Mammary epithelial cell (primary cell): ENCODE measurements at regions of chr16 and their contacts with region 1.

Region 1: GRCh38 chr16:18983565-18984424 is at the start of gene TMC7:
- DNase-seq: peak; percentile 83
- H3K4me3 ChIP-seq: peak within 1 kb of the TSS; percentile 56 to 82 (median 76)
- H3K27ac ChIP-seq: peak within 1 kb of the TSS; percentile 75
- H3K4me1 ChIP-seq: peaks cover 6% of the 10 kb centered on the region
- H3K27me3 ChIP-seq: no peaks in the 10 kb centered on the region
- CTCF ChIP-seq: peak; percentile 57 to 96
- total RNA-seq, gene TMC7: 13.7 to 17.5 TPM

Region 2: DNA sequence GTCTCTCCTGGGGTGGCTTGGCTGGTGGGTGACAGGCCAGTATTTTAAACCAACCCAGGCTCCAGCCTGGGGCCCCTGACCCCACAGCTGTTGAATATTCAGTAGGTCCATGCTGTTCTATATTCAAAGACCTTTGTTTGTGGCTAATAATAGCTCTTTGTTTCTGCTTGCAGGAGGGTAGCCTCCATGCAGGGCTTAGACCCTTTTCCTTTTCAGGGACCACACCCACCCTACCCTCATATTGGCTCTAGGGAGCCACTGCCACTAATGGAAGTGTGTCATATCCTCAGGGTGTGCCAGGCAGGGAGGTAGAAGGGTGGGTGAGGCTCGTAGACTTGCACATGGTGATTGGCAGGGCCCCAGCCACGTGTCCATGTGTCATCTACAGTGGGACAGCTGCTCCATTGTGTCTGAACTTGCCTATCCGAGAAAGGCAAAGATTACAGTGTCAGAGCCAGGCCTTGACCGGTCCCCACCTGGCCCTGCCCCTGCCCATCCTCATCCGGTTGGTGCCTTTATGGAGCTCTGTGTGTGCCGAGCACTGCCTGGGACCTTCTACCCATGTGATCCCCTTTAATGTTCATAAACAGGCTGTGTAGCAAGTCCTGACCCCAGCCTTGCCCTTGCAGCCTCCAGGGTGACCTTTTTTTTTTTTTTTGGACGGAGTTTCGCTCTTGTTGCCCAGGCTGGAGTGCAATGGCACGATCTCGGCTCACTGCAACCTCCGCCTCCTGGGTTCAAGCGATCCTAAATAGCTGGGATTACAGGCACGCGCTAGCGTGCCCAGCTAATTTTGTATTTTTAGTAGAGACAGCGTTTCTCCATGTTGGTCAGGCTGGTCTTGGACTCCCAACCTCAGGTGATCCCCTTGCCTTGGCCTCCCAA is 22.0 kb after region 1 on chr16:
- CTCF ChIA-PET with region 1: interaction called, 9 read pairs
- dilution Hi-C with region 1: no loop called
- in situ Hi-C with region 1: no loop called
- intact Hi-C with region 1: loop called (anchors 1 kb)
- DNase-seq: peak; percentile 99
- H3K4me3 ChIP-seq: no peak overlapping the region
- H3K27ac ChIP-seq: peak overlapping the region; percentile 97
- H3K4me1 ChIP-seq: peaks cover 64% of the 10 kb centered on the region
- H3K27me3 ChIP-seq: no peaks in the 10 kb centered on the region
- CTCF ChIP-seq: no peak

Region 3: DNA sequence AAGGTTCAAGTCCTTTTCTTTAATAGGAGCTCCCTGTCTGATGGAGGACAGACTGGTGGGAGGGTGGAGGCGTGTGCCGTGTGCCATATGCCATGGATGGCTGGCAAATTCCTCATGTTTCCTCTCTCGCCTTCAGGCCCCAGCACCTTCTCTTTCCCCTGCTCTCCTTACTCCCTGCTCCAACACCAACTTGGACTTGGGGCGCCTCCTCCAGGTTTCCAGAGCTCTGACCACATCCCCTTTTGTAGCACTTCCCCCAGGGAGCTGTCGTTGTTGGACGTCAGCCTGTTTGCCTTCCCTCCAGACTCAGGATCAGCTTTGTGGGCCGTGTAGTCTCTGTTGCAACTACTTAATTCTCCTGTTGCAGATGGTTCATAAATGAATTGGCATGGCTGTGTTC is 30.7 kb after region 1 on chr16:
- CTCF ChIA-PET with region 1: interaction called, 6 read pairs
- dilution Hi-C with region 1: no loop called
- in situ Hi-C with region 1: no loop called
- intact Hi-C with region 1: loop called (anchors 1 kb)
- DNase-seq: no peak
- H3K4me3 ChIP-seq: no peak overlapping the region
- H3K27ac ChIP-seq: no peak overlapping the region
- H3K4me1 ChIP-seq: no peaks in the 10 kb centered on the region
- H3K27me3 ChIP-seq: no peaks in the 10 kb centered on the region
- CTCF ChIP-seq: peak in 1 of 2 donors; percentile 31